ENCODE measurements at regions of chr7 and their contacts with region 1.

Region 1: DNA sequence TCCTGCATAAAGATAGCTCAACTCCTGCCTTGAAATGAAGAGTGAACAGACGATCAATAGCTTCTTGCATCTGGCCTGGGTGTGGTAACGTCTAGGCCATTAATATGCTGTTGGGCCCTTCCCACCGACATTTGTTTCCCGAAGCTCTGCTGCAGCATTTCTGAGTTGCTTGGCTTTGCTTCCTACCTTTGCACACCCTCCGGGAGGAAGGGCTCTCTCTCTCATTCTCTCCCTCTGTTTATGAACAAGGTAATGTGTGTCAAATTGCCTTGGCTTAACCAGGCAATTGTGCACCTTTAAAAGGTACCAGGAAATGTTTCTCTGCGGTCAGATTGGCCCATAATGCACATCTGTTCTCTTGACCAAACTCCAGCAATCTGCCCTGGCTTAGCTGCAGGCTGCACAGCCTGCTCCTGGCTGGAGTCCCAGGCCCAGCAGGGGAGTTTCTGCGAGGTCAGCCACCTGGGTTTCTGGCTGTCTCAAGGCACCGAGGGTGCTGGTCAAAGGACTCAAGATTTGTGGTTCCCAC is 223.7 kb downstream of the SNX10 start:
- DNase-seq: no peak
- ATAC-seq: peak; percentile 92
- H3K4me3 ChIP-seq: peak overlapping the region in 1 of 2 experiments; percentile 19; a peak in 2 of 4 replicates
- H3K27ac ChIP-seq: peak overlapping the region; percentile 80
- H3K4me1 ChIP-seq: peaks cover 16% of the 10 kb centered on the region
- H3K27me3 ChIP-seq: no peaks in the 10 kb centered on the region; the same call in 1 of the 2 replicates
- CTCF ChIP-seq: no peak

Region 2: DNA sequence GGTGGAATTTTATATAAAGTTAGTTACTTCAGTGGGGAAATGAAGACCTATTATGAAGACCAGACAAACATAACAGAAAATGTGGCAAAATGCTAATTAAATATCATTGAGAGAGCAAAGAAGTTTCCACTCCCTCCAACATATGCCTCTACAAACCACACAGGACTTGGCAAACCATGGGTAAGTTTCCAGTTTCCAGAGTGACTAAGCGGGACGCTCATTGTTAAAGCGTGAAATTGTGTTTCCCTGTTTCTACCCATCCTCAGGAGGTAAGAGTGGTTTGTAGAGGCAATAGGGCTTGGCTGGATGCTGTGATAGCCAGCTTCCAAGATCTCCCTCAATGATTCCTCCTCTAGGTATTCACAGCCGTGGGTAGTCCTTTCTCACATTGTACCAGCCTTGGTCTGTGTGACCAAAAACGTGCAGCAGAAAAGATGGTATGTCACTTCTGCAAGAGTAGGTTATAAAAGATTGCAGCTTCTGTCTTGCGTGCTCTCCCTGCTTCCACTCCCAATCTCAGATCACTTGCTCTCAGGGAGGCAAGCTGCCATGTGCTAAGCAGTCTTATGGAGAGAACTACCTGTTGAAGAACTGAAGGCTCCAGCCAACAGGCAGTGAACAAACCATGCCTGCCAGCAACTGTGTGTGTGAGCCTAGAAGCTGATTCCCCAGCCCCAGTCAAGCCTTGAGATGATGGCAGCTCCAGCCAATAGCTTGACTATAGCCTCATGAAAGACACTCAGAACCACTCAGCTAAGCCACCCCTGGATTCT is 278.2 kb before region 1 on chr7:
- CTCF ChIA-PET with region 1: no interaction called
- POLR2A ChIA-PET with region 1: no interaction called
- in situ Hi-C with region 1: no loop called
- intact Hi-C with region 1: no loop called
- DNase-seq: no peak
- ATAC-seq: peak; percentile 66
- H3K4me3 ChIP-seq: no peak overlapping the region
- H3K27ac ChIP-seq: no peak overlapping the region
- H3K4me1 ChIP-seq: no peaks in the 10 kb centered on the region
- H3K27me3 ChIP-seq: no peaks in the 10 kb centered on the region; the same call in 1 of the 2 replicates
- CTCF ChIP-seq: no peak

Region 3: DNA sequence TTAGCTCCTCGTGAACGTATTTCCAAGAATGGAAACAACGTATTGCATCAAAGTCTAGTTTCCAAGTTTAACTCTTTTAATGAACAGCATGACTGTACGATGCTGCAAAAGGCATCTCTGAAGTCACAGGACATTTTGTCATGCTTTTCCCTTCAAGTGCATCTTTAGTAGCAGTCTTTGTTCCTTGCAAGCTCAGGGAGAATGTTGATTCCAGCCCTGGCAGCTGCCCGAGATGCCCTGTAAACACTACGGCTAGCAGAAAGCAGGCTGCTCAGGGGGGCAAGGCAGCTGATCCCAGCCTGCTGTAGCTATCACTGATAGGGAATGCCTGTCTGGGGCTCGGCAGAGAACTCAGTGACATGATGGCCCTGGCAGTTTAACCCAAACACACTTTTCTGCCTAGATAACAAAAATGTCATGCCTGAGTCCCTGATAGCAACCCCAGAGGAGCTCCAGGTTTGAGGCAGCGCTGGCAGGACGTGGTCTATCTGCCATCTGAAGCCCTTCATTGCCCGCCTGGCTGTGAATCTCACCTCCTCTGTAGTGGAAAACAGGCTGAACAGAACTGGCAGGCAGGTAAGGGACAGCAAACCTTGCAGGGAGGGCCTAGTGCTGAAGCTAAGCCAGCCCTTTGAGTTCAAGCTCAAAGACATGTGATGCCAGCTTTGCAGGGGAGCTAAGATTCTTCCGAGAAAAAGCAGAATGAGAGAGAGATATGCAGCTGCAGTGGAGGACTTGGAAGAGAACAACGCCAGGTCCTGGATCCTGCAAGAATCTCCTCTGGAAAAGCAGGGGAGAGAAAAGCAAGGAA is 40.9 kb after region 1 on chr7:
- CTCF ChIA-PET with region 1: interaction called, 11 read pairs
- POLR2A ChIA-PET with region 1: no interaction called
- in situ Hi-C with region 1: no loop called
- intact Hi-C with region 1: no loop called
- DNase-seq: no peak
- ATAC-seq: no peak
- H3K4me3 ChIP-seq: no peak overlapping the region
- H3K27ac ChIP-seq: no peak overlapping the region
- H3K4me1 ChIP-seq: no peaks in the 10 kb centered on the region
- H3K27me3 ChIP-seq: peaks cover 2% of the 10 kb centered on the region; the same call in 1 of the 2 replicates
- CTCF ChIP-seq: no peak

Region 4: DNA sequence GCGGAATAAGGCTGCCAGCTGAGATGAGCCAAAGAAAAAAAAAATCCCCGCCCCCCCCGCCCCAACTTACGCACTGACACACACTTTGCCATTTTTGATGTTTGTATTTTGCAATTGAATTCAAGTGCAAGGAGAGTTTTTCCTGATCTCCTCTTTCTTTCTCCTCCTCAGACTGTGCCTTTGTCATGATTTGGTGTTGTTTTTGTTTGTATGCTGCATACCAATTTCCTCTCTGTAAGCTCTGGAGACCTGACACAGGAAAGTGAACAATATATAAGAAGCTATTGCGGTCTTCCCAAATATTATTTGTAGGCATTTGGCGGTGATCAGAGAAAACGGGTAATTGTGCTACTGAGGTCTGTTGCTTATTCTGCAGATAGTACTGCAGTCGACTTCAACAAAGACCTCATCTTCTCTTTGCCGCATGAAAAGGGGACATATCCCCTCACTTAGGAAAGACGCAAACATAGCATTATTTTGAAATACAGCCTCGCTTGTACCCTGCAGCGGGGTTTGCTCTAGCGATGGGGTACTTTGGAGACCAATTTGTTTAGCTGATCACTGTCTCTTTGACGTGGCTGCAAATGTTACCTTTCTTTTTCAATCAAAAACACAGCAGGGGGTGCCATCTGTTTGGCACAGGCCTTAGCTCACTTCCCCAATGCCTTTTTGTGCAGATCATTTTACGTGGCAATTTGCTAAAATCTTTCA is 142.5 kb after region 1 on chr7:
- CTCF ChIA-PET with region 1: no interaction called
- POLR2A ChIA-PET with region 1: no interaction called
- in situ Hi-C with region 1: no loop called
- intact Hi-C with region 1: loop called (anchors 5 kb)
- DNase-seq: no peak
- ATAC-seq: no peak
- H3K4me3 ChIP-seq: no peak overlapping the region
- H3K27ac ChIP-seq: no peak overlapping the region
- H3K4me1 ChIP-seq: peaks cover 9% of the 10 kb centered on the region; the same call in 1 of the 2 replicates
- H3K27me3 ChIP-seq: peaks cover 4% of the 10 kb centered on the region; the same call in 1 of the 2 replicates
- CTCF ChIP-seq: no peak

Region 5: DNA sequence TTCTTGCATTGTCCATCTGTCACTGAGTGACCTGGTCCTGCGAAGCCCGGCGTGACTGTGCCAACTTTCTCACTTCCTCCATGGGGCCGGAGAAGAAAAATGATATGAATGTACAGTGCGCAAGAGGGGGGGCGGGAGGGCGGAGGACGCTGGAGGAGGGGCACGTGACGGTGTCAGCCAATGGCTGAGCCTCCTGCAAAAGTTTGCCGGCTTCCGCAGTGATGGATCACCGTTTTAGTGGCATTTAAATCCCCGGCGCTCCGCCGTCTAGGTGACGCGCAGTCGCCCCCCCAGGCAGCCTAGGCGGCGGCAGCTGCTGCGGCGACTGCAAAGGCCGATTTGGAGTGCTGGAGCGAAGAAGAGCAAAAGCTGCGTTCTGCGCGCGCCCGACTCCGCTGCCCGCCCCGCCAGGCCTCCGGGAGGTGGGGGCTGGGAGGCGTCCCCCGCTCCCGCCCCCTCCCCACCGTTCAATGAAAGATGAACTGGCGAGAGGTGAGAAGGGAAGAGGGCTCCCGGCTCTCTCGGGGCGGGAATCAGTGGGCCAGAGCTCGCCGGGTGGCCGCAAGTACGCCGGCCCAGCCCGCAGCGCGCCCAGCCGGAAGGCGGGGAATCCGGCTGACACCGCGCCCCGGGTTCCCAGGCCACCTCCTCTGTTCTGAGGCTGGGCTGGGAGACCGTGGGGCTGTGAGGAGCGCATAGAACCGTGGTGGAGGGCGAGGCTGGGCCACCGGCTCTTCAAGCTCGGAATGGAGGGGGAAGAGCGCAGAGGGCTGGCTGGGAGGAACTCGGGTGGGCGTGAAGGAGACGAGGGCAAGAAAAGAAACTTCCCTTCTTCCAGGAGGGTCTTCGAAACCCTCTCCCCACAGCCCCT is 580.8 kb after region 1 on chr7 and contains the start of gene HOXA1:
- CTCF ChIA-PET with region 1: no interaction called
- POLR2A ChIA-PET with region 1: no interaction called
- in situ Hi-C with region 1: no loop called
- intact Hi-C with region 1: no loop called
- DNase-seq: no peak
- ATAC-seq: peak; percentile 84
- H3K4me3 ChIP-seq: peak within 1 kb of the TSS; percentile 85 to 93
- H3K27ac ChIP-seq: peak within 1 kb of the TSS; percentile 99
- H3K4me1 ChIP-seq: peaks cover 60% of the 10 kb centered on the region
- H3K27me3 ChIP-seq: no peaks in the 10 kb centered on the region
- CTCF ChIP-seq: no peak; the same call in 1 of the 2 replicates
- total RNA-seq, gene HOXA1: 8.8 TPM

Measured in Panc1 (cell line).